ENCODE measurements at regions of chr17 and their contacts with region 1.

Region 1: GRCh38 chr17:7351665-7352501 is at the start of gene KCTD11:
- DNase-seq: peak; percentile 40 to 88 (median 58)
- ATAC-seq: peak; percentile 72
- H3K4me3 ChIP-seq: peak within 1 kb of the TSS; percentile 57
- H3K4me3 Mint-ChIP-seq: peak within 1 kb of the TSS; percentile 78 to 94 (median 88)
- H3K27ac ChIP-seq: peak within 1 kb of the TSS; percentile 74
- H3K27ac Mint-ChIP-seq: peak within 1 kb of the TSS; percentile 72 to 91 (median 86)
- H3K4me1 ChIP-seq: peaks cover 10 to 27% of the 10 kb centered on the region in 2 donors
- H3K4me1 Mint-ChIP-seq: peaks cover 14 to 62% (median 43%) of the 10 kb centered on the region in 7 donors
- H3K27me3 ChIP-seq: no peaks in the 10 kb centered on the region
- H3K27me3 Mint-ChIP-seq: no peaks in the 10 kb centered on the region
- total RNA-seq, gene KCTD11: 2.7 to 13.7 (median 4.0) TPM

Region 2: DNA sequence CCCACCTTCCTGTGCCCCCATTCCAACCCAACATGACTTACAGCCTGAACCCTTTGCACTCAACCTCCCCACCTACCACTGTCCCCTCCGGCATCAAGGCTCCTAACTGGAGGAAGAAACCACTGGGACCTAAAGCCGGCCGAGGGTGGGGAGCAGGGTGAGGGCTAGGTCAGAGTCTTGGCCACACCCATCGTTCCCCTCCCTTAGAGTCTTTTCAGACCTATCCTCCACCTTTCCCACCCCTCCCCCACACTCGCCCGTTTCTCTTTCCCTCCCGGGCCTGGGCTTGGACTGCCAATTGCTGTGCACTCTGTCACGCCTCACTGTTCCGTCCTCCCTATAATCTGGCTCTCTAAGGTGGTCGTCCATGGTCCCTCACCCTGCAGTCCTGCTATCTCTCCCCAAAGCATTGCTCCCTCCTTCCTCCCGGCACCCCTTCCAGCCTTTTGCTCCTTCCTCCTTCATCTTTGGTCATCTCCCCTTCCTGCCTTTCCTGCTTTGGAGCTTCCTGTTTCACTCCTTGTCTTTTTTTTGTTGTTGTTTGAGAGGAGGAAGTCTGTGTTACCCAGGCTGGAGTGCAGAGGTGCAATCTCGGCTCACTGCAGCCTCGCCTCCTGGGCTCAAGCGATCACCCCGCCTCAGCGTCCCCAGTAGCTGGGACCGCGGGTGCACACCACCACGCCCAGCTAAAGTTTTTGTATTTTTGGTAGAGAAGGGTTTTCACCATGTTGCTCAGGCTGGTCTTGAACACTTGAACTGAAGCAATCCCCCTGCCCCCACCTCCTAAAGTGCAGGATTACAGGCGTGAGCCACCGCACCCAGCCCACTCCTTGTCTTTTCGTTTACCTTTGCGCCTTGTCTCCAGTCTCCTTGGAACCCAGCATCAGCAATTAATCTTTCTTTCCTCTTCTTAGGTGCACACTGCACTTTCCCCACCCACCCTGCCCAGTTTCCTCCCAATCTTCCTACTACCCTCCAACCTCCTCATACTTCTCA is 88.5 kb before region 1 on chr17:
- CTCF ChIA-PET with region 1: no interaction called
- POLR2A ChIA-PET with region 1: no interaction called
- intact Hi-C with region 1: no loop called
- DNase-seq: peak in 1 of 9 donors; percentile 26
- ATAC-seq: peak; percentile 29
- H3K4me3 ChIP-seq: peak overlapping the region; percentile 39
- H3K4me3 Mint-ChIP-seq: peak overlapping the region; percentile 69 to 90 (median 84)
- H3K27ac ChIP-seq: no peak overlapping the region
- H3K27ac Mint-ChIP-seq: peak overlapping the region; percentile 0 to 84 (median 70)
- H3K4me1 ChIP-seq: peaks cover 13 to 19% of the 10 kb centered on the region in 2 donors
- H3K4me1 Mint-ChIP-seq: peaks cover 18 to 32% (median 28%) of the 10 kb centered on the region in 7 donors
- H3K27me3 ChIP-seq: no peaks in the 10 kb centered on the region
- H3K27me3 Mint-ChIP-seq: peaks cover 0 to 36% (median 15%) of the 10 kb centered on the region in 5 donors

Region 3: GRCh38 chr17:7280519-7281429 is 71.1 kb before region 1 on chr17:
- CTCF ChIA-PET with region 1: interaction called, 3 read pairs
- POLR2A ChIA-PET with region 1: no interaction called
- intact Hi-C with region 1: loop called (anchors 1 to 5 kb)
- DNase-seq: peak; percentile 76 to 88 (median 85)
- ATAC-seq: peak; percentile 95
- H3K4me3 ChIP-seq: peak overlapping the region; percentile 66
- H3K4me3 Mint-ChIP-seq: peak overlapping the region; percentile 77 to 87 (median 84)
- H3K27ac ChIP-seq: no peak overlapping the region
- H3K27ac Mint-ChIP-seq: peak overlapping the region in 7 of 9 donors; percentile 6 to 88 (median 51)
- H3K4me1 ChIP-seq: peaks cover 11 to 23% of the 10 kb centered on the region in 2 donors
- H3K4me1 Mint-ChIP-seq: peaks cover 14 to 31% (median 21%) of the 10 kb centered on the region in 7 donors
- H3K27me3 ChIP-seq: no peaks in the 10 kb centered on the region
- H3K27me3 Mint-ChIP-seq: peaks cover 6 to 44% (median 17%) of the 10 kb centered on the region in 5 donors

Region 4: DNA sequence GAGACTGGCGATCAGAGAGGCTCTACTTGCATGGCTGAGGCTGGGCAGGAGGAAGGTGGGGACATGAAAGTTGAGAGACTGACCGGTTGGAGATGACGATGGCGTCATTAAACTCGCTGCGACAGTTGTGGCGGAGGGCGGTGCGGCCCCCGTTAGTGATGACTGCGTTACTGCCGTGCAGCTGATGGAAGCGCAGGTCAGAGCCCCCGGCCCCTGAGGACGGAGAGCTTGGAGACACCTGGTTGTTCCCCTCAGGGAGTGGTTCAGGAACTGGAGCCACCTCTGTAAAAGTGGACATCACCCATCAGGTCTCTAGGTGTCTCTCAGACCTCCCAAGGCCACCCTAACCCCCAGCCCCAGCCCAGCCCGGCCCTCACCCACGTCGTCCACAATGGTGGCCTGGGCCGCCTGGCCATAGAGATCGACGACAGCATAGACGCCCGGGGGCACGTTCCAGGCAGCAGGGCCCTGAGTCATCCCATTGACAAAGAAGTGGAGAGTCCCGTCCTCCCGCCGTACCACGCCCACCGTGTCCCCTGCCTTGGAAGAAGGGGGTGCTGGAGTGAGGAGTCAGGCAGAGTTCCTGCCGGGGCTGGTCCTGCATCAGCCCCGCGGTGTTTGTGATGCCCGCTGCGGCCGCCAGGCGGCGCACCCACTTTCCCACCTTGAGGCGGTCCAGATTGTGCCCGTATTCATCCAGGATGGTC is 28.0 kb before region 1 on chr17:
- CTCF ChIA-PET with region 1: interaction called, 11 read pairs
- POLR2A ChIA-PET with region 1: interaction called, 13 read pairs
- intact Hi-C with region 1: loop called (anchors 1 to 2 kb)
- DNase-seq: peak; percentile 41 to 79 (median 62)
- ATAC-seq: peak; percentile 56
- H3K4me3 ChIP-seq: no peak overlapping the region
- H3K4me3 Mint-ChIP-seq: no peak overlapping the region
- H3K27ac ChIP-seq: no peak overlapping the region
- H3K27ac Mint-ChIP-seq: peak overlapping the region in 2 of 9 donors; percentile 41 to 52
- H3K4me1 ChIP-seq: peaks cover 0 to 7% of the 10 kb centered on the region in 2 donors
- H3K4me1 Mint-ChIP-seq: peaks cover 9 to 34% (median 18%) of the 10 kb centered on the region in 7 donors
- H3K27me3 ChIP-seq: no peaks in the 10 kb centered on the region
- H3K27me3 Mint-ChIP-seq: no peaks in the 10 kb centered on the region

Region 5: GRCh38 chr17:7336240-7337175 is 15.4 kb before region 1 on chr17 and contains the start of gene ACAP1:
- CTCF ChIA-PET with region 1: interaction called, 53 read pairs
- POLR2A ChIA-PET with region 1: interaction called, 98 read pairs
- intact Hi-C with region 1: loop called (anchors 1 kb)
- DNase-seq: peak; percentile 56 to 85 (median 82)
- ATAC-seq: peak; percentile 99
- H3K4me3 ChIP-seq: peak within 1 kb of the TSS; percentile 99
- H3K4me3 Mint-ChIP-seq: peak within 1 kb of the TSS; percentile 89 to 99 (median 94)
- H3K27ac ChIP-seq: peak within 1 kb of the TSS; percentile 81
- H3K27ac Mint-ChIP-seq: peak within 1 kb of the TSS; percentile 89 to 100 (median 95)
- H3K4me1 ChIP-seq: peaks cover 31 to 44% of the 10 kb centered on the region in 2 donors
- H3K4me1 Mint-ChIP-seq: peaks cover 49 to 76% (median 60%) of the 10 kb centered on the region in 7 donors
- H3K27me3 ChIP-seq: no peaks in the 10 kb centered on the region
- H3K27me3 Mint-ChIP-seq: no peaks in the 10 kb centered on the region
- total RNA-seq, gene ACAP1: 482 to 708 (median 599) TPM

Region 6: GRCh38 chr17:7394452-7395191 is 42.7 kb after region 1 on chr17 and contains the start of gene PLSCR3:
- CTCF ChIA-PET with region 1: interaction called, 7 read pairs
- POLR2A ChIA-PET with region 1: interaction called, 5 read pairs
- intact Hi-C with region 1: loop called in 1 of 2 experiments (anchors 2 kb)
- DNase-seq: peak; percentile 68 to 91 (median 82)
- ATAC-seq: peak; percentile 94
- H3K4me3 ChIP-seq: peak within 1 kb of the TSS; percentile 94
- H3K4me3 Mint-ChIP-seq: peak within 1 kb of the TSS; percentile 93 to 97 (median 95)
- H3K27ac ChIP-seq: peak within 1 kb of the TSS; percentile 87
- H3K27ac Mint-ChIP-seq: peak within 1 kb of the TSS; percentile 85 to 97 (median 92)
- H3K4me1 ChIP-seq: peaks cover 7 to 25% of the 10 kb centered on the region in 2 donors
- H3K4me1 Mint-ChIP-seq: peaks cover 25 to 46% (median 27%) of the 10 kb centered on the region in 7 donors
- H3K27me3 ChIP-seq: no peaks in the 10 kb centered on the region
- H3K27me3 Mint-ChIP-seq: no peaks in the 10 kb centered on the region
- total RNA-seq, gene PLSCR3: 74.8 to 142 (median 85.0) TPM

Region 7: GRCh38 chr17:7502987-7503386 is 151.1 kb after region 1 on chr17:
- CTCF ChIA-PET with region 1: no interaction called
- POLR2A ChIA-PET with region 1: no interaction called
- intact Hi-C with region 1: loop called in 1 of 2 experiments (anchors 1 kb)
- DNase-seq: peak in 2 of 9 donors; percentile 17 to 27
- ATAC-seq: peak; percentile 43
- H3K4me3 ChIP-seq: no peak overlapping the region
- H3K4me3 Mint-ChIP-seq: no peak overlapping the region
- H3K27ac ChIP-seq: no peak overlapping the region
- H3K27ac Mint-ChIP-seq: no peak overlapping the region
- H3K4me1 ChIP-seq: no peaks in the 10 kb centered on the region
- H3K4me1 Mint-ChIP-seq: peaks cover 0 to 3% (median 0%) of the 10 kb centered on the region in 7 donors
- H3K27me3 ChIP-seq: no peaks in the 10 kb centered on the region
- H3K27me3 Mint-ChIP-seq: no peaks in the 10 kb centered on the region

Measured in naive thymus-derived CD4-positive, alpha-beta T cell (primary cell).